ENCODE measurements at regions of chr16 and their contacts with region 1.

Region 1: DNA sequence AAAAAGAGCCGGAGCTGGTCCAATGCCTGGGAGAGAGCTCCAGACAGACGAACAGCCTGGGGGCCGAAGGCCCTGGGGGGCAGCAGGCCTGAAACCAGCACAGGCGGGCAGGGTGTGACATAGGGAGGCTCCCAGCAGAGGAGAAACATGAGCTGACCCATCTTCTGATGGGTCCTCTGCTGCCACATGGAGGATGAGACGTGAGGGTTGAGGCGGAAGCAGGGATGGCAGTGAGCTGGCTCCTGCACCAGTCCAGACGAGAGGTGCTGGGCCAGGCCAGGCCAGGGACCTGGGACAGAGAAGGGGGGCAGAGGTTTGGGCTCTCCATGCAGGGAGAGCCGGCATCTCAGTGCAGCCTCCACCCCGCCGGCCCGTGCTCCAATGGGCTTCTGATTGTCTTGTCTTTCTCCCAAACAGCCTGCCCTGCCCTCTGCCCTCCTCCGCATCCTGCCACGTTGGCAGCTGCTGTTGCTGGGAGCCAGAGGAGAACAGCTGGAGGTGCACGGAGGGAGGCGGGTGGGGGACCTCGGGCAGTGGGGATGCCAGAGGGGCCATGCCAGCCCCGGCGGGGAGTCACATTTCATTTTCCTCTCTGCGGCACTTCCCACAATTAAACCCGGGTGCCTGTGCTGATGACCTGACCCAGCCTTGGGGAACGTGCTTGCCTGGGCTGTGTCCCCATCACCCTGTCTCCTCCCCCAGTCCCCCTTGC is 139.1 kb upstream of the GSE1 start:
- DNase-seq: no peak
- H3K4me3 ChIP-seq: no peak overlapping the region
- H3K27ac ChIP-seq: no peak overlapping the region
- H3K4me1 ChIP-seq: peaks cover 39% of the 10 kb centered on the region
- H3K27me3 ChIP-seq: no peaks in the 10 kb centered on the region
- CTCF ChIP-seq: no peak

Region 2: GRCh38 chr16:85420501-85421337 is 53.3 kb before region 1 on chr16:
- CTCF ChIA-PET with region 1: interaction called, 6 read pairs
- POLR2A ChIA-PET with region 1: no interaction called
- intact Hi-C with region 1: loop called (anchors 5 kb)
- DNase-seq: peak in 1 of 2 experiments; percentile 75
- H3K4me3 ChIP-seq: no peak overlapping the region
- H3K27ac ChIP-seq: no peak overlapping the region
- H3K4me1 ChIP-seq: peaks cover 20% of the 10 kb centered on the region
- H3K27me3 ChIP-seq: no peaks in the 10 kb centered on the region
- CTCF ChIP-seq: peak; percentile 99

Region 3: DNA sequence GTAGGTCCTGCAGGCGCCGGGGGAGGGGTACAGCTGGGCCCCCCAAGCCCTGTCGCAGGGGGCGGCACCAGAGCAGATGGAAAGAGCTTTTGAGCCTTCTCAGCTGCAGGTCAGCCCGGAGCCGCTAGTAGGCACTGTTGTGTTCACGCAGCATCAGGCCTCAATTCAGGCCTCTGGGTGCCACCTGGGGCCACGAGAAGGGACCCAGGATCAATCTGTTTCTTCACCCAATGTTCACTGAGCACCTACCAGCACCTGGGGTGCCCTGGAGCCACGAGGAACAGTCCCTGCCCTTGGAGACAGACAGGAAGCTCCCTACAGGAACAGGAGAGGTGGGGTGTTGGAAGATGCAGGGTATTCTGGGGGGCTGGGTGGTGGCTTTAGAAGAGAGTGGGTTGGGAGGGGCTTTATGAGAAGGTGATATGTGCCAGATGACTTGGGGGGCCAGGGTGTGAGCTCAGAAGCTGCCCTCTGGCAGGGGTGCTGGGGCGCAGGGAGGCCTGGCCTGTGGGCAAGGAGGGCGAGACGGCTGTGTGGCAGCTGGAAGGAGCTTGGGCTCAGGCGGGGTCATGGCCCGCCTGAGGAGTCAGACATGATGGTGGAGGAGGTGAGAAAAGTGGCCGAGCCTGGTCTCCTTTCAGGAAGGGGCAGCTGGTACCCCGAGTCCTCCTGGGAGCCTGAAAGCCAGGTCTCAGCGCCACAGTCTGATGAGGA is 17.1 kb after region 1 on chr16:
- CTCF ChIA-PET with region 1: no interaction called
- POLR2A ChIA-PET with region 1: no interaction called
- intact Hi-C with region 1: loop called (anchors 1 kb)
- DNase-seq: no peak
- H3K4me3 ChIP-seq: no peak overlapping the region
- H3K27ac ChIP-seq: peak overlapping the region; percentile 29; the same call in 1 of the 2 replicates
- H3K4me1 ChIP-seq: peaks cover 26% of the 10 kb centered on the region
- H3K27me3 ChIP-seq: no peaks in the 10 kb centered on the region
- CTCF ChIP-seq: peak; percentile 72

Region 4: DNA sequence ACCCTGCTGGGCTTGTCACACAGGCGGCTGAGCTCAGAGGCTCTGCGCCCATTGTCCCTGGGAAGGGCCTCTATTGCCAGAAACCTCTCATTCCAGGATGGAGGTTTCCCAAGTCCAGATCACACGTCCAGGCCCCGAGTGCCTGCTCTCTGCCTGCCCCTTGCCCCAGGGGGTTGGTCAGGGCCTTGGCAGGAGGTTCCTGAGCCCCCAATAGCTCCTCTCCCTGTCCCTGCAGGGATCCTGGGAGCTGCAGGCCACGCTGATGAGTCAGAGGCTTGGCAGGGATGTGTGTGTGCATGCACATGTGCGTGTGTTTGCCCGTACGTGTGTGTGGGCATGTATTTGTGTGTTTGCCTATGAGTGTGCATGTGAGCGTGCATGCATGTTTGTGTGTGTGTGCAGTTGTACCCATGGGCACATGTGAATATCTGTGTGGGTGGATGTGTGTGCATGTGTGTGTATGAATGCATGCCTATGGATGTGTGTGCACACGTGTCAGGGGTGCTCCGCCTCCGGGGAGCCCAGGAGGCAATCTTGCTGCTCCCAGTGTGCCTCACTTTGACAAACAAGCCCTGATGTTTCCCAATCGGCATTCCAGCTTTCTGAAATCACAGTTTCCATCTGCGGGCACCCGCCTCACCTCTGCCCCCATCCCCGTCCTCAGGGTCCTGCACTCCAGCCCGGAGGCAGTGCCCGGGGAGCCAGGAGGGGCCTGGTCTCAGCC is 40.7 kb after region 1 on chr16:
- CTCF ChIA-PET with region 1: no interaction called
- POLR2A ChIA-PET with region 1: interaction called, 28 read pairs
- intact Hi-C with region 1: loop called (anchors 1 kb)
- DNase-seq: peak; percentile 87 to 95
- H3K4me3 ChIP-seq: peak overlapping the region; percentile 46; the same call in 1 of the 2 replicates
- H3K27ac ChIP-seq: peak overlapping the region; percentile 93
- H3K4me1 ChIP-seq: peaks cover 44% of the 10 kb centered on the region
- H3K27me3 ChIP-seq: no peaks in the 10 kb centered on the region
- CTCF ChIP-seq: no peak; the same call in 1 of the 2 replicates

Region 5: GRCh38 chr16:85520853-85521521 is 46.9 kb after region 1 on chr16:
- CTCF ChIA-PET with region 1: no interaction called
- POLR2A ChIA-PET with region 1: no interaction called
- intact Hi-C with region 1: loop called (anchors 1 kb)
- DNase-seq: peak; percentile 91 to 96
- H3K4me3 ChIP-seq: no peak overlapping the region; the same call in 1 of the 2 replicates
- H3K27ac ChIP-seq: peak overlapping the region; percentile 55
- H3K4me1 ChIP-seq: peaks cover 70% of the 10 kb centered on the region
- H3K27me3 ChIP-seq: no peaks in the 10 kb centered on the region
- CTCF ChIP-seq: no peak